ENCODE measurements at regions of chr1 and their contacts with region 1.

Region 1: DNA sequence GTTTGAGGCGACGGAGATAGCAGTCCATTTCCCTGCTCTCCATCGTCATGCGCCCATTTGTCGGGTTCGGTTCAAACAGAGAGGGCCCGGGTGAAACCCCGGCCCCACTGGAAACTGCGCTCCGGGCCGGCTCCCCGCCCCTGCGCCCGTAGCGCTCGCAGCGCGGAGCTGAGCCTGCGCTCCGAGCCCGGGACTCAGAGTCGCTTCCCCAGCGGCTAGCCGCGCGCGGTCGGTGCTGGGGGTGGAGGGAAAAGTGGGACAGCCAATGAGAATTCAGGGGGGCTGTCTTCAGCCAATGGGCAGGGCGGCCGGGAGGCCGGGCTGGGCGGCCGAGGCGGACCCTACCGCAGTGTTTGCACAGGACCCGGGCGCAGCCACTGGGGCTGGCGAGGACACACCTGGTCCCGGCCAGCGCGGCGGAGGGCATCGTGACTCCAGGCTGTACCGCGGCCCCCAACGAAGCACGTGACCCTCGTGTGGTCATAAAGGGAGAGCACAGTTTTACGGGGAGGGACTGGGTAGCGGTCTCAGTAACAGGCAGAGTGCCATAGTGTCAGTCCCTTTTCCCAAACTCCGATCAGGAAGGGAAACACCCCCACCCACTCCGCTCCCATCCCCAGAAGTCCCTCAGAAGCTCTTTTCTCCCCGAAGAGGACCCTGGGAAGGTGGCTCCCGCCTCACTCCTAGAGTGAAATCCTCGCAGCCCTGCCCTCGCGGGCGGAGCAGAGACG is at the start of gene INKA2:
- DNase-seq: peak; percentile 95
- ATAC-seq: peak; percentile 75
- H3K4me3 Mint-ChIP-seq: no peak within 1 kb of the TSS
- H3K27ac Mint-ChIP-seq: peak within 1 kb of the TSS; percentile 99
- H3K4me1 Mint-ChIP-seq: peaks cover 15% of the 10 kb centered on the region
- H3K27me3 Mint-ChIP-seq: peaks cover 23% of the 10 kb centered on the region
- CTCF ChIP-seq: no peak
- total RNA-seq, gene INKA2: 19.2 to 22.5 TPM (median 20.1 TPM) in 3 replicates

Region 2: GRCh38 chr1:111725192-111725591 is 14.2 kb before region 1 on chr1:
- CTCF ChIA-PET with region 1: interaction called, 14 read pairs
- POLR2A ChIA-PET with region 1: interaction called, 5 read pairs
- DNase-seq: no peak
- ATAC-seq: peak; percentile 16
- H3K4me3 Mint-ChIP-seq: no peak overlapping the region
- H3K27ac Mint-ChIP-seq: no peak overlapping the region
- H3K4me1 Mint-ChIP-seq: peaks cover 64% of the 10 kb centered on the region
- H3K27me3 Mint-ChIP-seq: no peaks in the 10 kb centered on the region
- CTCF ChIP-seq: no peak

Region 3: GRCh38 chr1:111769517-111770146 is 30.3 kb after region 1 on chr1:
- CTCF ChIA-PET with region 1: interaction called, 24 read pairs
- POLR2A ChIA-PET with region 1: no interaction called
- DNase-seq: no peak
- ATAC-seq: no peak
- H3K4me3 Mint-ChIP-seq: no peak overlapping the region
- H3K27ac Mint-ChIP-seq: no peak overlapping the region
- H3K4me1 Mint-ChIP-seq: no peaks in the 10 kb centered on the region
- H3K27me3 Mint-ChIP-seq: no peaks in the 10 kb centered on the region; the same call in 1 of the 2 replicates
- CTCF ChIP-seq: peak; percentile 60

Region 4: GRCh38 chr1:111786669-111787207 is 47.4 kb after region 1 on chr1:
- CTCF ChIA-PET with region 1: no interaction called
- POLR2A ChIA-PET with region 1: no interaction called
- DNase-seq: no peak
- ATAC-seq: no peak
- H3K4me3 Mint-ChIP-seq: no peak overlapping the region
- H3K27ac Mint-ChIP-seq: no peak overlapping the region
- H3K4me1 Mint-ChIP-seq: peaks cover 5% of the 10 kb centered on the region; the same call in 1 of the 2 replicates
- H3K27me3 Mint-ChIP-seq: no peaks in the 10 kb centered on the region; the same call in 1 of the 2 replicates
- CTCF ChIP-seq: no peak